ENCODE measurements at regions of chr11 and their contacts with region 1.

Region 1: DNA sequence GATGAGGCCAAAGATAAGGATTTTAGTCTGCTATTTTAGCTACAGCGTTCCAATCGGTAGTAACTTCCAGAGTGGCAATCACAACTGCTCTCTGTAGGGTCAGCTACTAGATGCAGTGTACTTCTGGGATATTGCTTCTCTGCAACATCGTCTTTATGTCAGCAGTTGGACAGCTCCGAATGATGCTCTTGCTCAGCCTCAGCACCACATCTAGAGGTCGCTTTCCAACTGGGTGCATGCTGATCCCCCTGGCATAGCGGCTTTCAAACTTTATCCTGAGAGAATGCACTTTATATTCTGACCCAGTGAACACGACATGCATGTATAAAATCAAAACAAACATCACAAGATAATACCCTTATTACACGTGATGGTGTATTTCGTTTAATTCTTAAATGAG is 219.6 kb downstream of the C11orf87 start:
- DNase-seq: peak; percentile 53
- ATAC-seq: peak; percentile 97
- H3K4me3 Mint-ChIP-seq: no peak overlapping the region
- H3K27ac Mint-ChIP-seq: no peak overlapping the region
- H3K4me1 Mint-ChIP-seq: no peaks in the 10 kb centered on the region
- H3K27me3 Mint-ChIP-seq: no peaks in the 10 kb centered on the region
- CTCF ChIP-seq: no peak

Region 2: DNA sequence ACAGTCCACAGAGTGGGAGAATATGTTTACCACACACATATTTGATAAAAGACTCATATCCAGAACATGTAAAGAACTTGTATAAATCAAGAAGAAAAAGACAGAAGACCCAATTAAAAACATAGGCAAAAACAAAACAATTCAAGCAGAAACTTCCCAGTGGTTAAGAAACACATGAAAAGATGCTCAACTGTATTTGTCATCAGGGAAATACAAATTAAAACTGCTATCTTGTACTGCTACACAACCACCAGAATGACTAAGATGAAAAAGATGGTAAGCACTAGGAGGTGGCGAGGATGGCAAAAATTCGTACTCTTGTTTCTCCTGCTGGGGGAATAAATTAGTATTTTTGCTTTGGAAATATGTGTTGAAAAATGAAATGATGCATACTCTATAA is 411.9 kb before region 1 on chr11:
- CTCF ChIA-PET with region 1: no interaction called
- POLR2A ChIA-PET with region 1: interaction called, 10 read pairs
- DNase-seq: no peak
- ATAC-seq: no peak
- H3K4me3 Mint-ChIP-seq: no peak overlapping the region
- H3K27ac Mint-ChIP-seq: no peak overlapping the region
- H3K4me1 Mint-ChIP-seq: no peaks in the 10 kb centered on the region
- H3K27me3 Mint-ChIP-seq: no peaks in the 10 kb centered on the region
- CTCF ChIP-seq: no peak

Region 3: DNA sequence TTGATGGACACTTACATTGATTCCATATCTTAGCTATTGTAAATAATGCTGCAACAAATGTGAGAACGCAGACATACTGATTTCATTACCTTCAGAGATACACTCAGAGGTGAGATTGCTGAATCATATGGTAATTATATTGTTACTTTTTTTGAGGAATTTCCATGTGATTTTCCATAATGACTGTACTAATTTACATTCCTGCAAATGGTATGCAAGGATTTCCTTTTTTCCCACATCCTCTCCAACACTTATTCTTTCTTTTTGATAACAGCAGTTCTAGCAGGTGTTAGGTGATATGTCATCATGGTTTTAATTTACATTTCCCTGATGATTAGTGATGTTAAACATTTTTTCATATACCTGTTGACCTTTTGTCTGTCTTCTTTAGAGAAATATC is 11.8 kb before region 1 on chr11:
- CTCF ChIA-PET with region 1: no interaction called
- POLR2A ChIA-PET with region 1: no interaction called
- DNase-seq: no peak
- ATAC-seq: no peak
- H3K4me3 Mint-ChIP-seq: no peak overlapping the region
- H3K27ac Mint-ChIP-seq: no peak overlapping the region
- H3K4me1 Mint-ChIP-seq: no peaks in the 10 kb centered on the region
- H3K27me3 Mint-ChIP-seq: no peaks in the 10 kb centered on the region
- CTCF ChIP-seq: no peak